ENCODE measurements at regions of chr12 and their contacts with region 1.

Region 1: DNA sequence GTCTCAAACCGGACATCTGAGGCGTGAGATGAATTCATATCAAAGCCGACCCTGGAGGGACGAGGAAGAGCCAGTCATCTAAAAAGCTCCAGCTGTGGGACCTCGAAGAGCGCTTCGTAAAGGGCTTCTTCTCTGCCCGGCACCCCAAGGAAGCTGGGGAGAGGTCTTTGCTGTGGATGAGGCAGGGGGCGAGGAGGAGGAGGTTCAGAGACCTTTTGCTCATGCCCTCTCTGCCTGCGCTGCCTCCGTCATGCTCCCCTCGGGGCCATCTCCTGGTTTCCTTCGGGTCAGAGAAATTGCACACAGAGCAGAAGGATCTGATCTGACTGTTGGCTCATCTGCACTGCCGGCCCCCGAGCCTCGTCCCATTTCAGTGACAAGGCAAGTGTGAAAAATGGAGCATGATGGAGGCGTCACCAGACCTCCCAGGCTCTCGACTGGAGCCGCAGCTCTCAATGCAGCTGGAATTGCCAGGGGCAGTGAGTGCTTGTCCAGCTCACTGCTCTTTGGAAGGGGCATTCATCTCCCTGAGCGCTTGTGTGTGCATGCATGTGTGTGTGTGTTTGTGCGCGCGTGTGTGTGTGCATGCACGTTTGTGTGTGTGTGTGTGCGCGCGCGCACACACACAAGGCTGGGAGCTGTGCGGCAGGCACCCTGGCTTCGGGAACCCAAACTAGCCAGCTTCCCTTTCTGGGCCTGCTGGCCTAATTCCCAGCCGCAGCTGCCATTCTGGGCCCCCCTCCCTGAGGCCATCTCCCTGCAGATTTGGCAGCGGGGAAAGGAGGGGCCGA is 9.2 kb downstream of the CABP1 start:
- DNase-seq: no peak
- CTCF ChIP-seq: no peak

Region 2: GRCh38 chr12:120625557-120626419 is 23.8 kb before region 1 on chr12:
- CTCF ChIA-PET with region 1: interaction called, 28 read pairs
- POLR2A ChIA-PET with region 1: no interaction called
- DNase-seq: no peak
- CTCF ChIP-seq: peak; percentile 11

Region 3: GRCh38 chr12:120669055-120669840 is 19.6 kb after region 1 on chr12:
- CTCF ChIA-PET with region 1: interaction called, 96 read pairs
- POLR2A ChIA-PET with region 1: no interaction called
- DNase-seq: no peak
- CTCF ChIP-seq: no peak

Region 4: GRCh38 chr12:120686690-120687577 is 37.3 kb after region 1 on chr12 and contains the start of gene MLEC:
- CTCF ChIA-PET with region 1: interaction called, 50 read pairs
- POLR2A ChIA-PET with region 1: no interaction called
- DNase-seq: peak; percentile 99
- CTCF ChIP-seq: peak; percentile 52

Region 5: GRCh38 chr12:120710031-120710804 is 60.6 kb after region 1 on chr12 and contains the start of gene UNC119B:
- CTCF ChIA-PET with region 1: interaction called, 42 read pairs
- POLR2A ChIA-PET with region 1: no interaction called
- DNase-seq: peak; percentile 88
- CTCF ChIP-seq: no peak

Measured in GM10248 (cell line).